PC-9 (cell line): ENCODE measurements at regions of chr15 and their contacts with region 1.

Region 1: GRCh38 chr15:33278816-33279612 is 31.8 kb upstream of the RYR3 start:
- DNase-seq: peak; percentile 70 to 83
- H3K4me3 ChIP-seq: no peak overlapping the region; the same call in 1 of the 2 replicates
- H3K27ac ChIP-seq: peak overlapping the region; percentile 95
- H3K4me1 ChIP-seq: peaks cover 29% of the 10 kb centered on the region
- H3K27me3 ChIP-seq: no peaks in the 10 kb centered on the region
- CTCF ChIP-seq: no peak

Region 2: GRCh38 chr15:33013827-33014445 is 265.1 kb before region 1 on chr15:
- CTCF ChIA-PET with region 1: no interaction called
- POLR2A ChIA-PET with region 1: no interaction called
- intact Hi-C with region 1: loop called (anchors 10 kb)
- DNase-seq: peak; percentile 56 to 93
- H3K4me3 ChIP-seq: no peak overlapping the region
- H3K27ac ChIP-seq: peak overlapping the region; percentile 71
- H3K4me1 ChIP-seq: peaks cover 23% of the 10 kb centered on the region
- H3K27me3 ChIP-seq: no peaks in the 10 kb centered on the region
- CTCF ChIP-seq: no peak

Region 3: GRCh38 chr15:33242669-33243191 is 36.3 kb before region 1 on chr15:
- CTCF ChIA-PET with region 1: no interaction called
- POLR2A ChIA-PET with region 1: no interaction called
- intact Hi-C with region 1: loop called (anchors 2 kb)
- DNase-seq: peak; percentile 8 to 34
- H3K4me3 ChIP-seq: no peak overlapping the region
- H3K27ac ChIP-seq: peak overlapping the region; percentile 75
- H3K4me1 ChIP-seq: peaks cover 43% of the 10 kb centered on the region
- H3K27me3 ChIP-seq: no peaks in the 10 kb centered on the region
- CTCF ChIP-seq: peak; percentile 63

Region 4: DNA sequence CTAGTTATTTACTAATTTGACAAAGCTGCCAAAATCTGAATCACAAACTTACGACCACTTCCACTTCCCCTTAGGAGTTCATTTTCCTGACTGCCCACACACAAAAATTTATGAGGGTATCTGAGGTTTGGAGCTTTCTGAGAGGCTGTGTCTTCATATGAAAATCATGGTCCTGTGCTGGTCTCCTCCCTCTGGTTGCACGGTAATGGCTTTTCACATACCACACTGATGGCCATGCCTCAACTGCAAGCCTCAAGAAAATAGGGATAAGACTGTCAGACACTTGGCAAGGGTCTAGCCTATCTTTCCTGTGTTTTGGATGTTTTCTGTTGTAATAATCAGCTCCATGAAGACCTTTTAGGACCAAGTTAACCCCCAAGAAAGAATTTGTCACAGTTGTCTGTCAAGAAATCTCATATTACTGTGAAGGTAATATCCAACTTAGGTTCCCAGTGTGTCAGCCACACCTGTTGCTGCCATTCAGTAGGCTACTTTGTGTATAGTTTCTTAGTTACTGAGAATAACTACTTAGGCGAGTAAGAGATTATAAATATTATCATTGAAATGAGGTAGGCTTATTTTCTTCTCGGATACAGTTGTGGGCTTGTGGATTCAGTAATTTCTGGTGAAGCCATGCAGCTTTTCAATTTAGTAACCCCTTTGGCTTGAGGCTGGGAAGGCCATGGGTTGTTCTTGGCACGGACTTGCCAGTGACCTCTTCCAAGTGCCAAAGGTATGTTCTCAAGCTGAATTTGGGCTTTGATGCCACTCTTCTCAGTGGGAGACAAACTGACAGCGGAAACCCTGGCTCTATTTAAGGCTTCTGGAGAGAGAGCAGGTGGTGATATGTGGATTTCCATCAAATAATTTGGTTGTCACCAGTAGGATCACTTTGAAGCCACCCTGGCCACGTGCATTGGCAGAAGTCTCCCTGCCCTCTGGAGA is 132.9 kb after region 1 on chr15:
- CTCF ChIA-PET with region 1: no interaction called
- POLR2A ChIA-PET with region 1: no interaction called
- intact Hi-C with region 1: no loop called
- DNase-seq: no peak
- H3K4me3 ChIP-seq: no peak overlapping the region
- H3K27ac ChIP-seq: no peak overlapping the region
- H3K4me1 ChIP-seq: no peaks in the 10 kb centered on the region
- H3K27me3 ChIP-seq: no peaks in the 10 kb centered on the region
- CTCF ChIP-seq: no peak

Region 5: DNA sequence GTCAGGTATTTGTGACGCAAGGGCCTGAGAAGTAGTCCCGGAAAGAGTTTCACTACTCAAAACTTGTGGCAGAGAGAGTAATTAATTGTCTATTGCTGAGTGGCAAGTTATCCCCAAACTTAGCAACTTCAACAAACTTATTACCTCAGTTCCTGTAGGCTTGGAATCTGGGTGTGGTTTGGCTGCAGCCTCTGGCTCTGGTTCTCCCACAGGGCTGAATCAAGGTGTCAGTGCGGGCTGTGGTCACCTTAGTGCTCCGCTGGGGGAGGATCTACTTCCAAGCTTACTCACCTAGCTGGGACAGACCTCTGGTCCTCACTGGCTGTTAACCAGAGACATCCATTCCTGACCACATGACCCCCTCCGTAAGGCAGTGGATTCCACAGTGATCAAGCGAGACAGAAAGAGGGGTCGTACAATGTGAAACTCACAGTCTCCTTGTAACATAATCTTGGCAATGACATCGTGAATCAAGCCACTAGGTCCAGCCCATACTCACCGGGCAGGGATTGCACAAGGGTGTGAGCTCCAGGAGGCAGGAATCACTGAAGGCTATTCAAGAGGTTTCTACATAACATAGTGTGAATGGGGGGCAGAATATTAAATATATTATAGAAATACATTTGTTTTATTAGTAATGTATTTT is 170.1 kb after region 1 on chr15:
- CTCF ChIA-PET with region 1: no interaction called
- POLR2A ChIA-PET with region 1: no interaction called
- intact Hi-C with region 1: no loop called
- DNase-seq: peak; percentile 70 to 89
- H3K4me3 ChIP-seq: peak overlapping the region; percentile 42; the same call in 1 of the 2 replicates
- H3K27ac ChIP-seq: peak overlapping the region; percentile 95
- H3K4me1 ChIP-seq: peaks cover 21% of the 10 kb centered on the region
- H3K27me3 ChIP-seq: no peaks in the 10 kb centered on the region
- CTCF ChIP-seq: no peak